H1 (cell line): ENCODE measurements at regions of chr14 and their contacts with region 1.

Region 1: GRCh38 chr14:93033983-93034670 is 81.6 kb downstream of the ITPK1 start:
- DNase-seq: no peak
- H3K4me3 ChIP-seq: no peak overlapping the region
- H3K27ac ChIP-seq: no peak overlapping the region
- H3K4me1 ChIP-seq: peaks cover 10 to 39% (median 25%) of the 10 kb centered on the region in 4 experiments
- H3K27me3 ChIP-seq: no peaks in the 10 kb centered on the region
- CTCF ChIP-seq: peak; percentile 67 to 74 (median 71)
- EP300 ChIP-seq: no peak
- POLR2A ChIP-seq: no peak
- RAD21 ChIP-seq: peak; percentile 58 to 70

Region 2: GRCh38 chr14:92922883-92923743 is 111.0 kb before region 1 on chr14 and contains the start of gene CHGA:
- CTCF ChIA-PET with region 1: no interaction called
- POLR2A ChIA-PET with region 1: no interaction called
- DNase-seq: peak; percentile 31 to 94
- H3K4me3 ChIP-seq: peak within 1 kb of the TSS; percentile 36 to 79 (median 68)
- H3K27ac ChIP-seq: no peak within 1 kb of the TSS
- H3K4me1 ChIP-seq: peaks cover 0 to 15% (median 4%) of the 10 kb centered on the region in 4 experiments; a peak in 4 of 7 replicates
- H3K27me3 ChIP-seq: peaks cover 0 to 7% (median 2%) of the 10 kb centered on the region in 4 experiments; a peak in 3 of 7 replicates
- CTCF ChIP-seq: no peak
- EP300 ChIP-seq: no peak
- POLR2A ChIP-seq: peak in 1 of 2 experiments; percentile 79; a peak in 2 of 3 replicates
- RAD21 ChIP-seq: no peak
- total RNA-seq, gene CHGA: 15.7 and 17.5 TPM in 2 replicates

Region 3: GRCh38 chr14:93011748-93012321 is 22.3 kb before region 1 on chr14:
- CTCF ChIA-PET with region 1: interaction called, 71 read pairs
- POLR2A ChIA-PET with region 1: no interaction called
- DNase-seq: no peak
- H3K4me3 ChIP-seq: no peak overlapping the region
- H3K27ac ChIP-seq: no peak overlapping the region
- H3K4me1 ChIP-seq: peaks cover 0 to 9% (median 3%) of the 10 kb centered on the region in 4 experiments; a peak in 4 of 7 replicates
- H3K27me3 ChIP-seq: no peaks in the 10 kb centered on the region
- CTCF ChIP-seq: no peak
- EP300 ChIP-seq: no peak
- POLR2A ChIP-seq: no peak
- RAD21 ChIP-seq: no peak; a peak in 1 of 4 replicates

Region 4: GRCh38 chr14:93023039-93023438 is 11.1 kb before region 1 on chr14:
- CTCF ChIA-PET with region 1: interaction called, 71 read pairs
- POLR2A ChIA-PET with region 1: interaction called, 4 read pairs
- DNase-seq: no peak
- H3K4me3 ChIP-seq: no peak overlapping the region
- H3K27ac ChIP-seq: no peak overlapping the region
- H3K4me1 ChIP-seq: peaks cover 4 to 30% (median 20%) of the 10 kb centered on the region in 4 experiments
- H3K27me3 ChIP-seq: no peaks in the 10 kb centered on the region
- CTCF ChIP-seq: peak in 2 of 3 experiments; percentile 20 to 21; a peak in 2 of 4 replicates
- EP300 ChIP-seq: no peak
- POLR2A ChIP-seq: no peak
- RAD21 ChIP-seq: no peak; a peak in 2 of 4 replicates

Region 5: DNA sequence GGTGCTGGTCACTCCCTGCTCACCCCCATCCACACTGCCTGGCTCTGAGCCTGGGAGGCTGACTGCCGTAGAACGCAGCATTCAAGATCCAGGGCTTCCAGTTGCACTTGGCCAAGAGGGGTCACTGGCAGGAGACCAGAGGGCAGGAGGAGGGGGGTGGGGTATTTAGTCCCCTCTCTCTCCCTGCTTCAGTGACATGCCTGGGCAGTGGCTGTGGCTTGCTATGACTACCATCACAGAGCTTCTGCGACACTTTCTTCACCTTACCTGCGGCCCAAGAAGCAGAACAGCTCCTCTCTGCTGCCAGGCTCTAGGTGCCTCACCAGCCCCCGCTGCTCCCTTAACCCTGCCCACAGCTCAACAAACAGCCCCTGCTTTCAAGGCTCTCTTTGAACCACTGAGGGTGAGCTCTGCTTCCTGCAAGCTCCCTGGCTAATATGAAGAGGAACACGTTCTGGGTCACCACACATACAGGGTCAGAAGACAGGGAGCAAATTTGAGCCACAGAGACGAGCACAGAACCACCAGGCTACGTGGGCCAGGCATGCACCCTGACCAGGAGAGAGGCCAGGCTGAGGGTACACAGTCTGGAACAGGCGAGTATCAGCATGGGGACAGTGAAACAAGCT is 25.9 kb after region 1 on chr14:
- CTCF ChIA-PET with region 1: interaction called, 16 read pairs
- POLR2A ChIA-PET with region 1: interaction called, 3 read pairs
- DNase-seq: no peak
- H3K4me3 ChIP-seq: no peak overlapping the region
- H3K27ac ChIP-seq: peak overlapping the region; percentile 18; the same call in 1 of the 2 replicates
- H3K4me1 ChIP-seq: peaks cover 4 to 31% (median 17%) of the 10 kb centered on the region in 4 experiments
- H3K27me3 ChIP-seq: no peaks in the 10 kb centered on the region
- CTCF ChIP-seq: no peak
- EP300 ChIP-seq: no peak
- POLR2A ChIP-seq: no peak
- RAD21 ChIP-seq: no peak